Astrocyte of the cerebellum (primary cell): ENCODE measurements at regions of chr9 and their contacts with region 1.

Region 1: DNA sequence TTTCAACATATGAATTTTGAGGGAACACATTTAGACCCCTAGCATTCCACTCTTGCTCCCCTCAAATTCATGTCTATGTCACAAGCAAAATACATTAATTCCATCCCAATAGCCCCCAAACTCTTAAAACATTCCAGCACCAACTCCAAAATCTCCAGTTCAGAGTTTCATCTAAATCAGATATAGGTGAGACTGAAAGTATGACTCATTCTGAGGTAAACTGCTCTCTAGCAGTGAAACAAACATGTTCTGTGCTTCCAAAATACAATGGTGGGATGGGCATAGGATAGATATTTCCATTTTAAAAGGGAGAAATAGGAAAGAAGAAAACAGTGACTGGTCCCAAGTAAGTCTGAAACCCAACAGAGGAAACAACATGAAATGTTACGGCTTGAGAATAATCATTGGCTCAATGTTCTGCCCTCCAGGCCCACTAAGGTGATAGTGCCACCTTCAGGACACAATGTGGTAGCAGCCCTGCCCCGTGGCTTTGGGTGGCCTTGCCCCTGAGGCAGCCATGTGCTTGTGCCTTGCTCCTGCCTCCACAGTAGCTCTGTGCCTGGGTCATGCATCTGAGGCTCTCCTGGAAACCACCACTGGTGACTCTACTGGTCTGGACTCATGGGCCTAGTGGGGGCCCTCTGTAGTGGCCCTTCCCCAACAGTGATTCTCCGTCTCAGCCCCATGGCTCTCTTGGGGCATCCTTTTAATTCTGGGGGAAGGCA is 36.4 kb upstream of the IPPK start:
- DNase-seq: no peak
- H3K4me3 ChIP-seq: no peak overlapping the region
- CTCF ChIP-seq: no peak

Region 2: GRCh38 chr9:92463984-92464383 is 242.4 kb before region 1 on chr9:
- in situ Hi-C with region 1: no loop called
- DNase-seq: peak; percentile 46
- H3K4me3 ChIP-seq: no peak overlapping the region
- CTCF ChIP-seq: no peak

Region 3: DNA sequence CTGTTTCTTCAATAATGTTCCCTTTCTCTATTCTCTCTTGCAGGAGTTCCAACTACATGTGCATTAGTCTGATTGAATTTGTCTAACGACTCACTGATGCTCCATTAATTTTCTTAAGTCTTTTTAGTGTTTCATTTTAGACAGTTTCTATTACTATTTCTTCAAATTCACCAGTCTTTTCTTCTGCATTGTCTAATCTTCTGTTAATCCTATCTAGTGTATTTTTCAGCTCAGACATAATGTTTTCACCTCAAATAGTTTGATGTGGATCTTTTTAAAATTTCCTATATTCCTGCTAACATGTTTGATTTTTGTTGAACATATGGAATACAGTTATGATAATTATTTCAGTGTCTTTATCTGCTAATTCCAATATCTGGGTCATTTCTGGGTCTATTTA is 79.9 kb after region 1 on chr9:
- in situ Hi-C with region 1: loop called (anchors 5 kb)
- DNase-seq: no peak
- H3K4me3 ChIP-seq: no peak overlapping the region
- CTCF ChIP-seq: no peak

Region 4: DNA sequence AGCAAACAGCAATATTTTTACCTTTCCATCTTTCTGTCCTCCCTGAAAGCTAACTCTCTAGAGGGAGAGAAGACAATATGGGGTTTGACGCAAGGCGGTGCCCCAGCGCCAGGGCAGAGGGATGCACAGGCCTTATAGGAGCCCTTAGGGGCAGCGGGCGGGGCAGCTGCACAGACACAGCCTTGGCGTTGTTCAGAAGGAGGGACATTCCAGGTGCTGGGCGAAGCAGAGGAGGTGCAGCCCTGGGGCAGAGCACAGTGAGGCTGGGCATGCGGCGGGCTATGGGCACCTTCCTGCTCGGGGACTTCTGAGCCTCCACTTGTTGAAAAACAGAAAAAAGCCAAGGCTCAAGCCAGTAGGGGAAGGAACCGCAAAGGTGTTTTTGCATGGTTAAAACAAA is 92.0 kb after region 1 on chr9:
- in situ Hi-C with region 1: no loop called
- DNase-seq: no peak
- H3K4me3 ChIP-seq: no peak overlapping the region
- CTCF ChIP-seq: no peak